ENCODE measurements at regions of chr4 and their contacts with region 1.

Region 1: DNA sequence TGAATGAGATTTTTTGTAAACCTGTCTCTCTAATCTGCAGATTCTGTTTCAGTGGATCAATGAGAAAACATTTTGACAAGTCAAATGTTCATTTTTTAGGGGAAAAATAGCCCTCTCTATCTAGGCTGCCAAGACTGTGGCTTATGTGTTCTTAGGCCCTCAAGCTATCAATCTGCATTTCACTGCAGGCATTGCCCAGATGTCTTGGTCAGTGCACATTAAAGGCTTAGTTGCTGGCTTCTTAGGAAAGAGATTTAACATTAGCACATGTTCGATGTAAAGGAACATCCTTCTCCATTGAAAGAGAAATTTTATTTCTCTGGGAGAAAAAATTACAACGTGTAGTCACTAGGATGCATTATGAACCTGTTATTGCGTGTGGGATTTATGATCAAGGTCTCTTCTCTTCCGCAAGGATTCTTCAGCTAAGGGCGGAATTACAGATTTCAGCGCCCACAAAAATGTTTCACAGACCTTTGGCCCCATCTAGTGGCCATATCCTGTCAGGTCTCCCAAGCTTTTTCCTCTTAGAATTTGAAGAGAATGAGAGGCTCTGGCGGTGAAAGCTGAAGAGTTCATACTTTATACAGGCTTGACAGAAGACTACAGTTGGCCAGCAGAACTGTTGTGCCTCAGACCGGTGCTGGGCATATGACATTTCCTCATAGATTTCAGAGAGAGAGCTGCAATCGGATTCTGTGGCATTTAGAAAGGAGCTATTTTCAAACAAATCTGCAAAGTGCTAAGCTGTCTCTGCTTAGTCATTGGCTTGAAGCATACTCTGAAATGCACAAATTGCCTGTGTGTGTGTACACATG is 144.6 kb upstream of the NOCT start:
- DNase-seq: peak; percentile 58 to 68
- H3K4me3 ChIP-seq: no peak overlapping the region
- H3K27ac ChIP-seq: no peak overlapping the region
- H3K4me1 ChIP-seq: no peaks in the 10 kb centered on the region
- H3K27me3 ChIP-seq: no peaks in the 10 kb centered on the region
- CTCF ChIP-seq: peak; percentile 68 to 88 (median 85)
- POLR2A ChIP-seq: no peak

Region 2: DNA sequence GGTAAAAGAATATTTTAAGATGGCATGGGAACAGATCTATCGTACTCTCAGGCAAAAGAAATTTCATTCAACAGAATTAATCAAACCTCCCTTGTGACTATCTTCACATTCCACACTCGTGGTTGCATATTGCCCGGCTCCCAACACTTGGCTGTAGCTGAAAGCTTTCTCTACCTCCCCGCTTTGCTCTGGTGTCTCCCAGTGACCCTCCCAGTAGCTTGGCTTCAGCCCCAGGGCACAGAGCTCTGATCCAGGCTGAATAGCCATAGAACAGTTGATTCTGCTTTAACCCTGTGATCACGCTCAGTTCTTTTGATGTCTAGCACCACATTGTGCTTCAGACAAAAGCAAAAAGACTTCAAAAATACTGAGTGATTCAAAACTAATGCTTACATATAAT is 653.4 kb before region 1 on chr4:
- intact Hi-C with region 1: loop called (anchors 5 kb)
- DNase-seq: no peak
- H3K4me3 ChIP-seq: no peak overlapping the region
- H3K27ac ChIP-seq: no peak overlapping the region
- H3K4me1 ChIP-seq: no peaks in the 10 kb centered on the region
- H3K27me3 ChIP-seq: no peaks in the 10 kb centered on the region
- CTCF ChIP-seq: no peak
- POLR2A ChIP-seq: no peak

Region 3: GRCh38 chr4:138831948-138832347 is 39.0 kb before region 1 on chr4:
- intact Hi-C with region 1: no loop called
- DNase-seq: no peak
- H3K4me3 ChIP-seq: no peak overlapping the region
- H3K27ac ChIP-seq: no peak overlapping the region
- H3K4me1 ChIP-seq: no peaks in the 10 kb centered on the region
- H3K27me3 ChIP-seq: no peaks in the 10 kb centered on the region
- CTCF ChIP-seq: no peak
- POLR2A ChIP-seq: no peak

Measured in breast epithelium (tissue), 4 donors.